ENCODE measurements at regions of chr3 and their contacts with region 1.

Region 1: DNA sequence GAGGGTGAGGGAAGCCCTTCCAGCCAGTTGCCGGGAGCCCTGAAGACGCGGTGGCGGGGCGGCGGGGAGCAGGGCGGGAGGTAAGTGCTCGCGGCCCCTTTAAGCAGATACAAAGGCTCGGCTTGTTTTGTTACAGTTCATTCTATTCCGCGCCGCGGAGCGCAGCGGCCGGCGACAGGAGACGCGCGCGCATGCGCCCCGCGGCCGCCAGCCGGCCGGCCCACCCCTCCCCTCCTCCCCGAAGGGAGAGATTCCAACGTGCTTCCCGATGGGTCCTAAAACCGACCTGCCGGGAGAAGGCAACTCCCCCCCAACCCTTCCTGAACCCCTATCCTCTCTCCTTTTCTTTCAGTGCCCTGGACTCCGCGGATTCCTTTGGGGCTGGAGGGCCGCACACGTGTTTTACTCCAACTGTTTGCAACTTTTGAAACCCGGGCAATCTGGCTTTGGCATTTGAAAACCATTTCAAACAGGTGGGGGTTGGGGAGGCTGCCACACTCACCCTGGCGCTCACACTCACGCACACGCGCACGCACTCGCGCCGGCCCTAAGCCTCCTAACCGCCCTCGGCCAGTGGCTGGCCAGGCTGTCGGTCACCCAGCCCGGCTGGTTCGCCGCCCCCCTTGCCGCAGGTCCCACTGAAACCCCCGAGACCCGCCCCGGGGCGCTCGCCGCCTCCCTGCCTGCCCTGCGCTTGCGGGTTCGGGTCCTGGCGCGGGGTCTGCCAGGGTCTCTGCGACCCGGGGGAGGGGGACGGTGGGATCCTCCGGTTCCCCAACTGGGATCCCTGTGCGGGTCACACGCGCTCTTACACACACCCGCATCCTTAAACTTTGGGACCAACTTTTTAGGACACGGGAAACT is at the start of gene MAGI1:
- DNase-seq: peak; percentile 93 to 96 (median 94)
- H3K4me3 ChIP-seq: peak within 1 kb of the TSS; percentile 66 to 91 (median 88)
- H3K27ac ChIP-seq: peak within 1 kb of the TSS; percentile 66 to 95 (median 90)
- H3K4me1 ChIP-seq: peaks cover 0 to 19% of the 10 kb centered on the region in 2 donors
- H3K27me3 ChIP-seq: no peaks in the 10 kb centered on the region
- CTCF ChIP-seq: peak in 1 of 6 experiments; percentile 12
- POLR2A ChIP-seq: peak; percentile 55 to 97
- total RNA-seq, gene MAGI1: 9.5 to 31.6 (median 19.2) TPM

Region 2: GRCh38 chr3:65953301-65953812 is 85.6 kb before region 1 on chr3:
- intact Hi-C with region 1: loop called in 1 of 2 experiments (anchors 10 kb)
- DNase-seq: peak in 6 of 7 donors; percentile 47 to 77 (median 56)
- H3K4me3 ChIP-seq: no peak overlapping the region
- H3K27ac ChIP-seq: peak overlapping the region in 4 of 5 donors; percentile 3 to 82 (median 58)
- H3K4me1 ChIP-seq: peaks cover 24 to 35% of the 10 kb centered on the region in 2 donors
- H3K27me3 ChIP-seq: no peaks in the 10 kb centered on the region
- CTCF ChIP-seq: no peak
- POLR2A ChIP-seq: no peak

Region 3: GRCh38 chr3:65979162-65979561 is 59.8 kb before region 1 on chr3:
- intact Hi-C with region 1: loop called in 1 of 2 experiments (anchors 10 kb)
- DNase-seq: peak in 2 of 7 donors; percentile 17 to 20
- H3K4me3 ChIP-seq: no peak overlapping the region
- H3K27ac ChIP-seq: peak overlapping the region in 2 of 5 donors; percentile 58 to 70
- H3K4me1 ChIP-seq: peaks cover 0 to 10% of the 10 kb centered on the region in 2 donors
- H3K27me3 ChIP-seq: no peaks in the 10 kb centered on the region
- CTCF ChIP-seq: no peak
- POLR2A ChIP-seq: no peak

Region 4: GRCh38 chr3:66195347-66195783 is 156.4 kb after region 1 on chr3:
- intact Hi-C with region 1: no loop called
- DNase-seq: peak in 5 of 7 donors; percentile 5 to 74 (median 29)
- H3K4me3 ChIP-seq: no peak overlapping the region
- H3K27ac ChIP-seq: no peak overlapping the region
- H3K4me1 ChIP-seq: no peaks in the 10 kb centered on the region
- H3K27me3 ChIP-seq: no peaks in the 10 kb centered on the region
- CTCF ChIP-seq: peak in 1 of 6 experiments; percentile 16
- POLR2A ChIP-seq: no peak

Region 5: GRCh38 chr3:66206806-66207205 is 167.8 kb after region 1 on chr3:
- intact Hi-C with region 1: no loop called
- DNase-seq: no peak
- H3K4me3 ChIP-seq: no peak overlapping the region
- H3K27ac ChIP-seq: no peak overlapping the region
- H3K4me1 ChIP-seq: no peaks in the 10 kb centered on the region
- H3K27me3 ChIP-seq: no peaks in the 10 kb centered on the region
- CTCF ChIP-seq: no peak
- POLR2A ChIP-seq: no peak